Activated CD8-positive, alpha-beta T cell treated with anti-CD3 and anti-CD28 coated beads for 36 hours (primary cell): ENCODE measurements at regions of chr5 and their contacts with region 1.

Region 1: DNA sequence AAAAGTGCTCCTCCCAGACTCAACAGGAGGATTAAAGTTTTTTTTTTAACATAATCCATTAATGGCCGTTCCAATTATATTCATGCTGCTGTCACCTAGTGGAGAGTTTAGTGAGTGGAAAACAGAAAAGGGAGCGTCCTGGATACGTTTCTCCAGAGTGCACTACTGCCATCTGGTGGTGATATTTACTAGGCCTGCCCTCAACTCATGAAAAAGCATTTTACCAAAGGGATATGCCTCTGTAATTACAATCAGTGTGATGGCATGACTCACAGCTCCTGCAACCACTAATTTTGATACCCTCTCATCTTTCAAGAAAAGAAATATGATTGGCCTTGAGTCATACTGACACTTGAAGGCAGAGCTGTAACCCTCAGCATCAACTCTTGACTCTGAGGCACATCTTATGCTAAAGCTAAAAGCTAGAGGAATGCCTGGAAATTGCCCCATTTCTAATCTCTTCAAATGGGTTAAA is 20.0 kb downstream of the MINAR2 start:
- DNase-seq: peak; percentile 80
- ATAC-seq: peak; percentile 95
- H3K4me3 Mint-ChIP-seq: no peak overlapping the region
- H3K27ac Mint-ChIP-seq: no peak overlapping the region
- H3K4me1 Mint-ChIP-seq: no peaks in the 10 kb centered on the region
- H3K27me3 Mint-ChIP-seq: peaks cover 4% of the 10 kb centered on the region
- CTCF ChIP-seq: peak; percentile 80

Region 2: DNA sequence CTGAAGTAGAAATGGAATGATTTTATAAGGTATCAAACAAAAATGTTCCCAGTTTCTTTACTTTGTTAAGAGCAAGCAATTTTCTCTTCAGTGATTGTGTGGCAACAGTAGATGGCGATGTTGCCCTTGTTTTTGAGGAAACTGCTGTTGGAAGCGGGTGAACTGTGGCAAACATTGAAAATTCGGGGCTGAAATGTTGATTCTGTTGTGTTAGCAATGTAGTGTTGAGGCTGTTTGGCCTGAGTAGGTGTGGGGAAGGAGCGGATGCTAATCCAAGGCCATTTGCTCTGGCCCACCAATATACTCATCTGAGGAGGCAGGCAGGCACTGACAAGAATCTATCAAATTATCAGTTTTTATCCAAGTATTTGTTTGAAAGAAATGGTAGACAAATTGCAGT is 1554.6 kb before region 1 on chr5:
- CTCF ChIA-PET with region 1: no interaction called
- POLR2A ChIA-PET with region 1: no interaction called
- intact Hi-C with region 1: loop called (anchors 10 kb)
- DNase-seq: peak; percentile 63
- ATAC-seq: no peak
- H3K4me3 Mint-ChIP-seq: no peak overlapping the region
- H3K27ac Mint-ChIP-seq: no peak overlapping the region
- H3K4me1 Mint-ChIP-seq: no peaks in the 10 kb centered on the region
- H3K27me3 Mint-ChIP-seq: peaks cover 2% of the 10 kb centered on the region
- CTCF ChIP-seq: peak; percentile 70

Region 3: DNA sequence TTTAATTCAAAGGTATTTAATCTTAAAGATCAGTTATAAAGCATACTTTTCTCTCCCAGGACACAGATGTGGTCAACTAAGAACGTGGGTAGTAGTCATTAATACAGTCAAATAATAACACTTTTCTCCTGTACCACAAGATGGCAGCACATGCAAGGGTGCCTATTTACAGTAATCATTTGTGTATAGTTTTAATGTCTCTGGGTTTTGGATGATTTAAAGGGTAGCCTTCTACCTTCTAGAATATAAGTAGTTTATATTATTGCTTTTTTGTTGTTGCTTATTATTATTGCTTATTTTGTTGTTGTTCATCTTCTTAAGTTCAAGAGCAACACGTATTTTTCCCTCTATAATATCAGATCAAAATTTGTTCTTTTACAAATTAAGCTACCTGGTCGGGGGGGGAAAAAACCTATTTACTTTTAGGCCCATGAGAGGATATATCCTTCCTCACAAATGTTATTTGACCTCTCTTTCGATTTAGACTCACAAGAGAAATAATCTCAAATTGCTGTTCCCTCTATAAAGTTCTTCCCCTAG is 862.3 kb before region 1 on chr5:
- CTCF ChIA-PET with region 1: interaction called, 5 read pairs
- POLR2A ChIA-PET with region 1: no interaction called
- intact Hi-C with region 1: loop called (anchors 5 kb)
- DNase-seq: peak; percentile 40
- ATAC-seq: peak; percentile 76
- H3K4me3 Mint-ChIP-seq: no peak overlapping the region
- H3K27ac Mint-ChIP-seq: no peak overlapping the region
- H3K4me1 Mint-ChIP-seq: no peaks in the 10 kb centered on the region
- H3K27me3 Mint-ChIP-seq: no peaks in the 10 kb centered on the region
- CTCF ChIP-seq: peak; percentile 87

Region 4: GRCh38 chr5:129172580-129172979 is 595.4 kb before region 1 on chr5:
- CTCF ChIA-PET with region 1: no interaction called
- POLR2A ChIA-PET with region 1: no interaction called
- intact Hi-C with region 1: loop called (anchors 10 kb)
- DNase-seq: no peak
- ATAC-seq: no peak
- H3K4me3 Mint-ChIP-seq: no peak overlapping the region
- H3K27ac Mint-ChIP-seq: no peak overlapping the region
- H3K4me1 Mint-ChIP-seq: no peaks in the 10 kb centered on the region
- H3K27me3 Mint-ChIP-seq: no peaks in the 10 kb centered on the region
- CTCF ChIP-seq: no peak

Region 5: DNA sequence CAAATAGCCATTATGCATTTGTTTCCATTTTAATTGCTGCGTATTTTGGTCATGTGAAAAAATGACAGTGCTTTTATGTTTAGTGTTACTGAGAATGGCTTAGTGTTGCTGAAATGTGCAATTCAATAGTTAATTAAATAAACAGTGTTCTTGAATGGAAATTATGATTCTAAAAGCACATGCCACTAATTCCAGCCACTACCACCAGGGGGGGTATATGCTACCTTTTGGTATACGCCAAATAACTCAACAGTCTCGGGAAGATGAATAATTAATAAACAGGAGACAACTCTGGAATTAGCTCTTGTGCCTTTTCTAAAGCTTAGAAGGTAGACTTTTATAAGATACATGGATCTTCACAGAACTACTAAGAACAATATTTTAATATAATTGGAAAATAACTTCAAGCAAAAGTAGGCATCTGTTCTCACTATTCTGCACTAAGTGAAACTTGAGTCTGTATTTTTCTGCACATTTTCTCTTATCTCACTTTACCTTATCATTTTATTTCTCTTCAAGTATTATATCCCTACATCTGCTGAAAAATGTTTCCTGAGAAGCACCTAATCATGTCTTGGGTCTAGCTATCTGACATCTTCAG is 103.5 kb before region 1 on chr5:
- CTCF ChIA-PET with region 1: interaction called, 9 read pairs
- POLR2A ChIA-PET with region 1: no interaction called
- intact Hi-C with region 1: loop called (anchors 2 kb)
- DNase-seq: peak; percentile 70
- ATAC-seq: no peak
- H3K4me3 Mint-ChIP-seq: no peak overlapping the region
- H3K27ac Mint-ChIP-seq: no peak overlapping the region
- H3K4me1 Mint-ChIP-seq: no peaks in the 10 kb centered on the region
- H3K27me3 Mint-ChIP-seq: peaks cover 1% of the 10 kb centered on the region
- CTCF ChIP-seq: peak; percentile 64

Region 6: GRCh38 chr5:129852747-129853352 is 84.9 kb after region 1 on chr5:
- CTCF ChIA-PET with region 1: interaction called, 150 read pairs
- POLR2A ChIA-PET with region 1: interaction called, 3 read pairs
- intact Hi-C with region 1: loop called (anchors 1 kb)
- DNase-seq: peak; percentile 87
- ATAC-seq: peak; percentile 82
- H3K4me3 Mint-ChIP-seq: no peak overlapping the region
- H3K27ac Mint-ChIP-seq: no peak overlapping the region
- H3K4me1 Mint-ChIP-seq: no peaks in the 10 kb centered on the region
- H3K27me3 Mint-ChIP-seq: peaks cover 15% of the 10 kb centered on the region
- CTCF ChIP-seq: peak; percentile 85

Region 7: DNA sequence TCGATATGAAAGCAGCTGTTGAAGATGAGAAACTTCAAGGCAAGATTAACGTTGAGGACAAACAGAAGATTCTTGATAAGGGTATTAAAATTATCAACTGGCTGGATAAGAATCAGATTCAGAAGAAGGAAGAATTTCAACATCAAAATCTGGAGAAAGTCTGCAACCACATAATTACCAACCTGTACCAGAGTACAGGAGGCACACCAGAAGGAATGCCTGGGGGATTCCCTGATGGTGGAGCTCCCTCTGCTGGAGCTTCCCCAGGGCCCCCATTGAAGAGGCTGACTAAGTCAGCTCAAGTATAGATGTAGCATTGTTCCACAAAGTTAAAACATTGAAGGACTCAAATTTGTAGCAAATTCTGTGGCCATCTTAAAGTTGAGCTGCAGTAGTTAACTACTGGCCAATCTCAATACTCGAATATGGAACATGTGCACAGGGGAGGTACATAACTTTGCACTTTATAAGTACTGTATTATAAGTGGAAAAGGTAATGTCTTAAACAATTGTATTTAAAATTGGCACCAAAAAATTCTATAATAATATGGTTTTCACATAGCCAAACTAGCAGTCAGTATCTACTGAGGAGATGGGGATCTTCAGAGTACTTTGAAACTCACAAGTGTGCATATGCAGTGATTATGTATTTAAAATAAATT is 373.8 kb after region 1 on chr5:
- CTCF ChIA-PET with region 1: interaction called, 18 read pairs
- POLR2A ChIA-PET with region 1: no interaction called
- intact Hi-C with region 1: no loop called
- DNase-seq: peak; percentile 27
- ATAC-seq: no peak
- H3K4me3 Mint-ChIP-seq: no peak overlapping the region
- H3K27ac Mint-ChIP-seq: no peak overlapping the region
- H3K4me1 Mint-ChIP-seq: no peaks in the 10 kb centered on the region
- H3K27me3 Mint-ChIP-seq: peaks cover 1% of the 10 kb centered on the region
- CTCF ChIP-seq: no peak